ENCODE measurements at regions of chr3 and their contacts with region 1.

Region 1: DNA sequence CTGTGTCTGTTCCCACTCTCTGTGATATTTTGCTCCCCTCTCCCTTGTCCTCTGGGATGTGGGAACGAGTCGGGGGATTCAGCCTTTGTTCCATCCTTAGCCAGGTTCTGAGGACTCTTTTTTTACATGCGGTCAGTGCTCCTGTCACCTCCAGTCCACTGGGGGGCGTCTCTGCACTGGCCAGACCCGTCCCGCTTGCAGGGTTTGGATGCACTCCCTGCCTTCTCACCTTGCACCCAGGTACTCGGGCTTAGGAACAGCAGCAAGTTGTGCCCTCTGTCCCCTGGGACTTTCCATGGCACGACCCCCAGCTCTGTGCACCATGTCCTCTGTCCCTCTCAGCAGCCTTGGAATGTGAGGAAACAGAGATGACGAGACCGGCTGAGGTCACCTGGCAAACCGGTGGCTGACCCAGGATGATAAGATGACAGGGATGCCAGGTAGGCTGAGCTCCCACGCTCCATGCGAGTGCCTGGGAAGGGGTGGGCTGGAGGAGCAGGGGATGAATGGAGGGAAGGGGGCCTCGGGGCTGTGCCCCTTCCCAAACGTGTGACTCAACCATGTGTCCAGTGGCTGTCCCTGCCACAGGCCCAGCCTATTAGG is 27.3 kb upstream of the FGD5 start:
- DNase-seq: peak; percentile 79
- ATAC-seq: peak; percentile 82
- H3K4me3 Mint-ChIP-seq: no peak overlapping the region
- H3K27ac Mint-ChIP-seq: no peak overlapping the region
- H3K4me1 Mint-ChIP-seq: peaks cover 2% of the 10 kb centered on the region
- H3K27me3 Mint-ChIP-seq: peaks cover 29% of the 10 kb centered on the region

Region 2: GRCh38 chr3:14921078-14921616 is 129.7 kb after region 1 on chr3:
- CTCF ChIA-PET with region 1: interaction called, 38 read pairs
- POLR2A ChIA-PET with region 1: no interaction called
- DNase-seq: peak; percentile 87
- ATAC-seq: peak; percentile 92
- H3K4me3 Mint-ChIP-seq: no peak overlapping the region
- H3K27ac Mint-ChIP-seq: no peak overlapping the region
- H3K4me1 Mint-ChIP-seq: no peaks in the 10 kb centered on the region
- H3K27me3 Mint-ChIP-seq: peaks cover 7% of the 10 kb centered on the region

Measured in activated CD8-positive, alpha-beta T cell treated with anti-CD3 and anti-CD28 coated beads, Interleukin-2, amount 10 ng/mL, durations not matched to agents 7 days and 5 days (primary cell).